ENCODE measurements at regions of chr17 and their contacts with region 1.

Region 1: DNA sequence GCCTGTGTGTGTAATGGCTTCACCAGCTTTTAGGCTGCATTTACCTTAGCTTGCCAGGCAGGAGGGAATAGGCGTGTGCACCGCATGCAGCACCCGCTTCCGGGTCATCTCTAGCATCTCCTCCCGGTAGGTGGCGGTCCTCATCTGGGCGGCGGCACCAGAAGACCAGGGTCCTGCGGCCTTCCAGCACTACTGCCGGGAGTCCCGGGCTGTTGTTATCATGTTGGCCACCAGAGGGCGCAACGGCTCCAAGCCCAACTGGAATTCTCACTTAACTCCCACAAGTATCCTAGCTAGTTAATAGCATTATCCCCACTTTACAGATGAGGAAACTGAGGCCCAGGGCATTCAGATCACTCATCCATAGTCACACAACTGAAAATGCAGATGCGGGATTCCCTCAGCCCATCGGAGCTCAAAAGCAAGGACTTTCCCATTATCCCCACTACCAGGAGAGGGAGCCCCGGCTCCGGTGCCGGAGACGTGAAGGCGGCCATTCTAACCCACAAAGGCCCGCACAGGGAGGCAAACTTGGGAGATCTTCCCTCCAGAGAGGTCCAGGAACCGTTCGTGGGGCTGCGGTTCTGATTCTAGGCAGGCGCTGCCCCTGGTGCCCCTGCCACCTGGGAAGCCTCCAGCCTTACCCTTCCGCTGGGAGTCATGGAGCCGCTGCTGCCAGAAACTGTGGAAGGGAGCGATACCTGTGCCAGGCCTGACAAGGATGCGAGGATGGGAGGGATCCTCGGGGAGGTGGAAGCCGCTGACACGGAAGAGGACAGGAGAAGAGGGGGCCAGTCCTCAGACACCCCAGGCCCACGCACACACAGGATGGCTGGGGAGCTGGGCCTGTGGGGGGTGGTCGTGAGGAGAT is 23.9 kb downstream of the LGALS9 start:
- DNase-seq: peak; percentile 63 to 84 (median 83)
- ATAC-seq: peak in 1 of 2 donors; percentile 22
- H3K4me3 ChIP-seq: no peak overlapping the region
- H3K27ac ChIP-seq: no peak overlapping the region
- H3K4me1 ChIP-seq: no peaks in the 10 kb centered on the region
- H3K27me3 ChIP-seq: no peaks in the 10 kb centered on the region

Region 2: GRCh38 chr17:27236717-27237315 is 418.1 kb before region 1 on chr17:
- intact Hi-C with region 1: loop called in 3 of 4 experiments (anchors 5 to 10 kb)
- DNase-seq: peak; percentile 67 to 85 (median 68)
- ATAC-seq: peak; percentile 53 to 62
- H3K4me3 ChIP-seq: no peak overlapping the region
- H3K27ac ChIP-seq: no peak overlapping the region
- H3K4me1 ChIP-seq: peaks cover 4% of the 10 kb centered on the region
- H3K27me3 ChIP-seq: no peaks in the 10 kb centered on the region

Region 3: GRCh38 chr17:27601069-27601975 is 53.6 kb before region 1 on chr17:
- intact Hi-C with region 1: loop called in 2 of 4 experiments (anchors 2 kb)
- DNase-seq: peak; percentile 75 to 91 (median 86)
- ATAC-seq: peak; percentile 33 to 70
- H3K4me3 ChIP-seq: no peak overlapping the region
- H3K27ac ChIP-seq: no peak overlapping the region
- H3K4me1 ChIP-seq: no peaks in the 10 kb centered on the region
- H3K27me3 ChIP-seq: no peaks in the 10 kb centered on the region

Region 4: DNA sequence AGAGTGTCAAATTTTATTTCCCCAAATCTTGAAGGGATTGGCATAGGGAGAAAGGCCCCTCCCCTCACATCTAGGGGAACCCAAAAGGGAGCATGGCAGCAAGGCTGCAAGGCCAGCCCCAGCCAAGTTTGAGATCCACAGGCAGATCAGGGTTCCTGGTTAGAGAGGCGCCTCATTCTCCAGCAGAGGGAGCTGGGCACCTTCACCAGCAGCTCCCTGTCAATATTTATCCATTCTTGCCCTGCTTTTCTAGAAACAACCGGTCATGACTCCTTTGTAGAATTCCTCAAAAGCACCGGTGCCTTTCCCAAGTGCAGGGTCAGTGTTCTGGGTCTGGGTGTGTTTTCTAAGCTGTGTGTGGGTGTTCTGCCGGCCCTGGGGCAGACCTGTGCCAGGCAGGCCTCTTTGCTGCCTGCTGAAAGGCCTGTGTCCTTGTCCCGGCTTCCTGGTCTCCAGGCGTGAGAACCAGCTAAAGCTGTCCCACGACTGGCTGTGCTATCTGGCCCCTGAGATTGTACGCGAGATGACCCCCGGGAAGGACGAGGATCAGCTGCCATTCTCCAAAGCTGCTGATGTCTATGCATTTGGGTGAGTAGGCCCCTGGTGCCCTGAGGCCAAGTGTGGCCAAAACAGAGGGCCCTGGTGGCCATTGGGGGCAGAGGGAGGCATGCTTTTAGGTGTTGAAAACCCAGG is 45.1 kb before region 1 on chr17:
- intact Hi-C with region 1: loop called in 3 of 4 experiments (anchors 2 kb)
- DNase-seq: peak in 2 of 3 donors; percentile 67 to 69
- ATAC-seq: peak; percentile 53 to 61
- H3K4me3 ChIP-seq: no peak overlapping the region
- H3K27ac ChIP-seq: no peak overlapping the region
- H3K4me1 ChIP-seq: no peaks in the 10 kb centered on the region
- H3K27me3 ChIP-seq: no peaks in the 10 kb centered on the region

Region 5: DNA sequence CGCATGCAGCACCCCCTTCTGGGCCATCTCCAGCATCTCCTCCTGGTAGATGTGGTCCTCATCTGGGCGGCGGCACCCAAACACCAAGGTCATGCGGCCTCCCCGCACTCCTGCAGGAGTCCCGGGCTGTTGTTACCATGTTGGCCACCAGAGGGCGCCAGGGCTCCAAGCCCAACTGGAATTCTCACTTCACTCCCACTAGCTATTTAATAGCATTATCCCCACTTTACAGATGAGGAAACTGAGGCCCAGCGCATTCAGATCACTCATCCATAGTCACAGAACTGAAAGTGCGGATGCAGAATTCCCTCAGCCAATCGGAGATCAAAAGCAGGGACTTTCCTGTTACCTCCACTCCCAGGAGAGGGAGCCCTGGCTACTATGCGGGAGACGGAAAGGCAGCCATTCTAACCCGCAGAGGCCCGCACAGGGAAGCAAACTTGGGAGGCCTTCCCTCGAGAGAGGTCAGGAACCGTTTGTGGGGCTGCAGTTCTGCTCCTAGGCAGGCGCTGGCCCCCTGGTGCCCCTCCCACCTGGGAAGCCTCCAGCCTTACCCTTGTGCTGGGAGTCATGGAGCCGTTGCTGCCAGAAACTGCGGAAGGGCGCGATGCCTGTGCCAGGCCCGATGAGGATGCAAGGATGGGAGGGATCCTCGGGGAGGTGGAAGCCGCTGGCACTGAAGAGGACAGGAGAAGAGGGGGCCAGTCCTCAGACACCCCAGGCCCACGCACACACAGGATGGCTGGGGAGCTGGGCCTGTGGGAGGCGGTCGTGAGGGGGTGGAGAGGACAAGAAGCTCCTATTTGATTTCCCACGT is 105.4 kb after region 1 on chr17:
- intact Hi-C with region 1: loop called (anchors 2 to 10 kb)
- DNase-seq: peak; percentile 55 to 87 (median 86)
- ATAC-seq: peak in 1 of 2 donors; percentile 55
- H3K4me3 ChIP-seq: no peak overlapping the region
- H3K27ac ChIP-seq: no peak overlapping the region
- H3K4me1 ChIP-seq: no peaks in the 10 kb centered on the region
- H3K27me3 ChIP-seq: no peaks in the 10 kb centered on the region